Activated CD4-positive, alpha-beta T cell treated with anti-CD3 and anti-CD28 coated beads, Interleukin-2, amount 10 ng/mL, durations not matched to agents 24 days and 14 days (primary cell): ENCODE measurements at regions of chr17 and their contacts with region 1.

Region 1: DNA sequence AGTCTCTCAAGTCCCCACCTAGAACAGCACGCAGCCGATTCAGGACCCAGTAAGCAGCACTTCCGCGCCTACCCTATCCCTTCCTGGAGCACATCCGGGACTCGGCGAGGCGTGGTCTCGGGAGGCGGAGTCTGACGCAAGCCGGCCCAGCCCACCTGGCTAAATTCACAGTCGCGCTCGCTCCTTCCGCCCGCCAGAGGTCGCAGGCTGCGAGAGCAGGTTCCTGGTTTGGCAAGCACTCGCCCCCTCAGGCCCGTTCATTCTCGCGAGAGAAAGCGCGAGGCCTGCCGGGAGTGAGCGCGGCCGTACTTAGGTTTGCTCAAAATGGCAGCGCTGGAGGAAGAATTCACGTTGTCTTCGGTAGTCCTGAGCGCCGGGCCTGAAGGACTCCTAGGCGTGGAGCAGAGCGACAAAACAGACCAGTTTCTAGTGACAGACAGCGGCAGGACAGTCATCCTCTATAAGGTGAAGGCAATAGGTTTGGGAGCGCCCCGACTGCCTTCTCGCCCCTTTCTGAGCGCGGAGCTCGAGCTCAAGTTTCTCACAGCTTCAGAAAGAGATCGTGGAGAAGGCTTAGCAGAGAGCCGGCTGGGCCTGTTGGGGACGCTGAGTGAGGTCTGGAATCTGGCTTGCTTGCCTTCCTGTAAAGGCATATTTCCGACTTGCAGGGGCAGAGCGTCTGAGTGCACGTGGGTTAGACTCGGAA is at the start of gene NOL11:
- DNase-seq: peak; percentile 100
- H3K4me3 Mint-ChIP-seq: peak within 1 kb of the TSS; percentile 90
- H3K27ac Mint-ChIP-seq: peak within 1 kb of the TSS; percentile 96
- H3K4me1 Mint-ChIP-seq: peaks cover 16% of the 10 kb centered on the region
- H3K27me3 Mint-ChIP-seq: peaks cover 4% of the 10 kb centered on the region
- total RNA-seq, gene NOL11: 110 and 118 TPM in 2 replicates

Region 2: GRCh38 chr17:67245073-67245755 is 472.6 kb before region 1 on chr17 and contains the start of gene HELZ:
- intact Hi-C with region 1: loop called (anchors 1 kb)
- DNase-seq: peak; percentile 94
- H3K4me3 Mint-ChIP-seq: peak within 1 kb of the TSS; percentile 93
- H3K27ac Mint-ChIP-seq: peak within 1 kb of the TSS; percentile 94
- H3K4me1 Mint-ChIP-seq: peaks cover 38% of the 10 kb centered on the region
- H3K27me3 Mint-ChIP-seq: no peaks in the 10 kb centered on the region
- total RNA-seq, gene HELZ: 73.5 and 74.7 TPM in 2 replicates

Region 3: DNA sequence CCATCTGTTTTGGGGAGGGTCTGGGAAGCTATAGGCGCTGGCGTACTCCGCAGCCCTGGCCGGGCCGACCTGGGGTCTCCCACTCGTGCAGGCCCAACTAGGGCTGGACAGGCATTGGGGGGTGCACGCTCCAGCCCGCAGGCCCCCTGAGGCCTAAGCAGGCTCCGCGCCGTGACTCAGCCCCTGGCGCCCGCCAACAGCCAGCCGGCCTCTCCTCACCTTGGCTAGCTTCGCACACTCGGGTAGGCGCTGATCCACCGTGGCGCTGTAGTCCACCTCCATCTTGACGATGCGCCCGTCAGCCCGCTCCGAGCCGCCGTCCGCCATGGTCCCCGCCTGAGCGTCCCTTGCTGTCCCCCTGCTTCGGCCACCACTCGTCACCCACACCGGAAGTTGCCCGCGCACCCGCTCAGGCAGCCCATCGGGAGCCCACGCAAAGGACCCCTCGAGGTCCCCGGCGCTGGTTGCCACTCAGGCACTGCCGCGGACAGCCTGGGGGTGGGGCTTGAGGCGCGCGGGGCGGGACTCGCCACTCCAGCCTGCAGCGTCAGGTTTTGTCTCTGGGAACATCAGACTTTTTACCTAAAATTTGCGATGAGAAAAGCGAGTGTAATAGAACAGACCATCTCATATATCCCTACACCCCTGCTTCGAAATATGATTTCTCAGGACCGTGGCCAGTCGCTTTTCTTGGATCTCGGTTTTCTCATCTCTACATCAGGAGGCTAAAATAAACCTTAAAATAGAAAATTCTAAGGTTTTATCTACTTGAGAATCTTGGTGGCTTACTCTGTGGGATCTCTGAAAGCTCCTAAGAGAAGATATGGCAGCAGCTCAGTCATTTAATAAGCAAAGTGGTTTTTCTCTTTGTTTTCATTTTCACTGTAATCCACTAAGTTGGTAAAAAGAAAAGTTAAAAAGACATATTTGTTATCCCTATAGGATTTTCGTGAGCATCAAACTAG is 351.3 kb before region 1 on chr17 and contains the start of gene PSMD12:
- intact Hi-C with region 1: loop called (anchors 1 kb)
- DNase-seq: peak; percentile 98
- H3K4me3 Mint-ChIP-seq: peak within 1 kb of the TSS; percentile 97
- H3K27ac Mint-ChIP-seq: peak within 1 kb of the TSS; percentile 93
- H3K4me1 Mint-ChIP-seq: peaks cover 41% of the 10 kb centered on the region
- H3K27me3 Mint-ChIP-seq: no peaks in the 10 kb centered on the region
- total RNA-seq, gene PSMD12: 92.3 and 93.6 TPM in 2 replicates

Region 4: GRCh38 chr17:67629971-67630320 is 87.8 kb before region 1 on chr17:
- intact Hi-C with region 1: no loop called
- DNase-seq: peak; percentile 63
- H3K4me3 Mint-ChIP-seq: no peak overlapping the region
- H3K27ac Mint-ChIP-seq: no peak overlapping the region
- H3K4me1 Mint-ChIP-seq: peaks cover 4% of the 10 kb centered on the region
- H3K27me3 Mint-ChIP-seq: no peaks in the 10 kb centered on the region

Region 5: GRCh38 chr17:67689534-67690177 is 28.1 kb before region 1 on chr17:
- intact Hi-C with region 1: no loop called
- DNase-seq: peak; percentile 87
- H3K4me3 Mint-ChIP-seq: no peak overlapping the region
- H3K27ac Mint-ChIP-seq: no peak overlapping the region
- H3K4me1 Mint-ChIP-seq: peaks cover 4% of the 10 kb centered on the region
- H3K27me3 Mint-ChIP-seq: no peaks in the 10 kb centered on the region

Region 6: DNA sequence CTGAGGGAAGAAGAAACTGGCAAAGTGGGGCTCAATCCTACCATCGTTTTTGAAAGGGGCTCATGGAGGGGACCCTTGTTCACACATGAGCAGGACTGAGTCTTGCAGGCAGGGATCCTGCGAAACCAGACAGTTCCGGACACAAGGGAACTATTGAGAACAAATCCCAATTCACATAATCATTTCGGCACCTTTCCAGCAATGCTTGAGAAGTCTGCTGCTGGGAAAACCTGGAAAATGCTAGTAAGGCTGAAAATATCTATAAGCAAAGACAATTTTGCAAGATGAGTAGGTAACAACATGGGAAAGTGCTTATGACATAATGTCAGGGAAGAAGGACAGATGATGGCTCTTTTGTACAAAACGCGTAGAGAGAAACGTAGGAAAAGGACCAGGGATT is 55.5 kb after region 1 on chr17:
- intact Hi-C with region 1: no loop called
- DNase-seq: no peak
- H3K4me3 Mint-ChIP-seq: no peak overlapping the region
- H3K27ac Mint-ChIP-seq: no peak overlapping the region
- H3K4me1 Mint-ChIP-seq: no peaks in the 10 kb centered on the region
- H3K27me3 Mint-ChIP-seq: peaks cover 2% of the 10 kb centered on the region

Region 7: GRCh38 chr17:67879662-67880061 is 161.9 kb after region 1 on chr17:
- intact Hi-C with region 1: no loop called
- DNase-seq: peak; percentile 25
- H3K4me3 Mint-ChIP-seq: no peak overlapping the region
- H3K27ac Mint-ChIP-seq: no peak overlapping the region
- H3K4me1 Mint-ChIP-seq: peaks cover 6% of the 10 kb centered on the region
- H3K27me3 Mint-ChIP-seq: no peaks in the 10 kb centered on the region